Naive thymus-derived CD4-positive, alpha-beta T cell (primary cell): ENCODE measurements at regions of chr17 and their contacts with region 1.

Region 1: DNA sequence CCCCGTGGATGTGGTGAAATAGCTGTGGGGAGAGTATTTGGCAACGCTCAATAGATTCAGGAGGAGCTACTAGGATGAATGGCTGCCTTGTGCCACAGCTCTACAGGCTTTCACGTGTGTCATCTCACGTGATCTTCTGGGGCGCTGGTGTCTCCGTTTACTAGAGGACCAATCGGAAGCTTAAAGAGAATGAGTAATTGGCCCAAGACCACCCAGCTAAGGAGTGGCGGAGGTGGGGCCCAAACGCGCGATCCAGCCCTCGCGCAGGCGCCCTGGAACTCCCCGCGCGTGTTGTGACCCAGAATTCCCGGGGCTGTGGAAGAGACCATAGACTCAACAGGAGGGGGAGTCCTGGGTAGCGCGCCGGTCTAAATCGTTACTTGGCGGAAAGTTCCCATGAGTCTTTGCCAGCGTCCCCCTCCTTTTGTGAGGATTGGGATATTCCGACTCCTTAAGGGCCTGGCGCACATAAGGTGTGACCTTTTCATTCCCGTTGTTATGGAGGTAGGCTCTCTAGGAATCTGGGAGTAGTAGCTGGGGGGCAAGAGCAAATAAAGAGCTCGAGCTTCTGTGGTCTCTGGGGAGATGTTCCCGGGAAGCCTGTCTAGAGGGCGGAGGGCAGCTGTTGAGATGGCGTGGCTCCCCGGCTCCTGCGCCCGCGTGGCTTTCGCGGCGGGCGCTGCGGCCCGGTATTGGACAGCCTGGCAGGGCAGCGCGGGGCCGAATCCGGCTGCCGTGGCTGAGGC is 23.4 kb downstream of the TRPV2 start:
- DNase-seq: peak; percentile 81 to 97 (median 95)
- ATAC-seq: peak; percentile 93
- H3K4me3 ChIP-seq: peak overlapping the region; percentile 89
- H3K4me3 Mint-ChIP-seq: peak overlapping the region; percentile 91 to 100 (median 100)
- H3K27ac ChIP-seq: peak overlapping the region; percentile 92
- H3K27ac Mint-ChIP-seq: peak overlapping the region; percentile 91 to 100 (median 99)
- H3K4me1 ChIP-seq: peaks cover 27 to 41% of the 10 kb centered on the region in 2 donors
- H3K4me1 Mint-ChIP-seq: peaks cover 30 to 55% (median 47%) of the 10 kb centered on the region in 7 donors
- H3K27me3 ChIP-seq: no peaks in the 10 kb centered on the region
- H3K27me3 Mint-ChIP-seq: no peaks in the 10 kb centered on the region

Region 2: GRCh38 chr17:16353317-16354174 is 85.2 kb before region 1 on chr17 and contains the start of gene CENPV:
- CTCF ChIA-PET with region 1: no interaction called
- POLR2A ChIA-PET with region 1: interaction called, 14 read pairs
- intact Hi-C with region 1: loop called in 1 of 2 experiments (anchors 2 kb)
- DNase-seq: peak; percentile 62 to 76 (median 71)
- ATAC-seq: peak; percentile 96
- H3K4me3 ChIP-seq: peak within 1 kb of the TSS; percentile 78
- H3K4me3 Mint-ChIP-seq: peak within 1 kb of the TSS; percentile 89 to 98 (median 95)
- H3K27ac ChIP-seq: peak within 1 kb of the TSS; percentile 73
- H3K27ac Mint-ChIP-seq: peak within 1 kb of the TSS; percentile 73 to 98 (median 86)
- H3K4me1 ChIP-seq: peaks cover 4 to 5% of the 10 kb centered on the region in 2 donors
- H3K4me1 Mint-ChIP-seq: peaks cover 11 to 23% (median 19%) of the 10 kb centered on the region in 7 donors
- H3K27me3 ChIP-seq: no peaks in the 10 kb centered on the region
- H3K27me3 Mint-ChIP-seq: peaks cover 0 to 27% (median 0%) of the 10 kb centered on the region in 5 donors
- total RNA-seq, gene CENPV: 9.8 to 30.3 (median 21.7) TPM

Region 3: DNA sequence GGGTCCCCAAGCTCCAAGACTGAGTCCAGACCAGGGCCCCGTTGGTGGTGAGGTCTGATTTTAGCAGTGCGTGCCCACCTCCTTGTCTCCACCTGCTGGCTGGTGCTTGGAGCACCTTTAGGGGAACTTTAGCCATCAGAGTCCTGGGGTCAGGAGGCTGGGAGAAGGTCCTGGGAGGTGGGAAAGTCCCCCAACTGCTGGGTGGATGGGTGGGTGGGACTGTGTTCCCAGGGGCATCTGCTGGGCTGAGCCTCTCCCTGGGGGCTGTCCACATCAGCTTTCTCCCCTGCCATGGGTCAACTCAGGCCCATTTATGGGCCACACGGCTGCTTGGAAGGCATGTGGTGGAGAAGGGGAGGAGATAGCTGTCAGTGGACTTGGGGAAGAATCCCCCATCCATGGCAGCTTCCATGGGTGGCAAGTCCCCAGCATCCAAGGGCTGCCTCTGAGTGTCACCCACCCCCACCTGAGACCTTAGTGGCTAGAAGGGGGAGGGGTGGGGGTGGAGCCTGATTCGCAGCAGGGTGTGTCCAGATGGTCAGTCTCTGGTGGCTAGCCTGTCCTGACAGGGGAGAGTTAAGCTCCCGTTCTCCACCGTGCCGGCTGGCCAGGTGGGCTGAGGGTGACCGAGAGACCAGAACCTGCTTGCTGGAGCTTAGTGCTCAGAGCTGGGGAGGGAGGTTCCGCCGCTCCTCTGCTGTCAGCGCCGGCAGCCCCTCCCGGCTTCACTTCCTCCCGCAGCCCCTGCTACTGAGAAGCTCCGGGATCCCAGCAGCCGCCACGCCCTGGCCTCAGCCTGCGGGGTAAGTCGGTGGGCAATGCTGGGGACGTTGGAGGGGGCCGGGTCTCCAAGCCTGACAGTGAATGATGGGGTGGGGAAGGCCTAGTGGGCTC is 23.5 kb before region 1 on chr17 and contains the start of gene TRPV2:
- CTCF ChIA-PET with region 1: interaction called, 6 read pairs
- POLR2A ChIA-PET with region 1: interaction called, 55 read pairs
- intact Hi-C with region 1: loop called (anchors 1 kb)
- DNase-seq: peak in 8 of 9 donors; percentile 36 to 58 (median 47)
- ATAC-seq: peak; percentile 57
- H3K4me3 ChIP-seq: peak within 1 kb of the TSS; percentile 93
- H3K4me3 Mint-ChIP-seq: peak within 1 kb of the TSS; percentile 90 to 100 (median 98)
- H3K27ac ChIP-seq: peak within 1 kb of the TSS; percentile 94
- H3K27ac Mint-ChIP-seq: peak within 1 kb of the TSS; percentile 96 to 100 (median 98)
- H3K4me1 ChIP-seq: peaks cover 37 to 47% of the 10 kb centered on the region in 2 donors
- H3K4me1 Mint-ChIP-seq: peaks cover 33 to 55% (median 42%) of the 10 kb centered on the region in 7 donors
- H3K27me3 ChIP-seq: no peaks in the 10 kb centered on the region
- H3K27me3 Mint-ChIP-seq: no peaks in the 10 kb centered on the region
- total RNA-seq, gene TRPV2: 66.8 to 141 (median 80.0) TPM

Region 4: DNA sequence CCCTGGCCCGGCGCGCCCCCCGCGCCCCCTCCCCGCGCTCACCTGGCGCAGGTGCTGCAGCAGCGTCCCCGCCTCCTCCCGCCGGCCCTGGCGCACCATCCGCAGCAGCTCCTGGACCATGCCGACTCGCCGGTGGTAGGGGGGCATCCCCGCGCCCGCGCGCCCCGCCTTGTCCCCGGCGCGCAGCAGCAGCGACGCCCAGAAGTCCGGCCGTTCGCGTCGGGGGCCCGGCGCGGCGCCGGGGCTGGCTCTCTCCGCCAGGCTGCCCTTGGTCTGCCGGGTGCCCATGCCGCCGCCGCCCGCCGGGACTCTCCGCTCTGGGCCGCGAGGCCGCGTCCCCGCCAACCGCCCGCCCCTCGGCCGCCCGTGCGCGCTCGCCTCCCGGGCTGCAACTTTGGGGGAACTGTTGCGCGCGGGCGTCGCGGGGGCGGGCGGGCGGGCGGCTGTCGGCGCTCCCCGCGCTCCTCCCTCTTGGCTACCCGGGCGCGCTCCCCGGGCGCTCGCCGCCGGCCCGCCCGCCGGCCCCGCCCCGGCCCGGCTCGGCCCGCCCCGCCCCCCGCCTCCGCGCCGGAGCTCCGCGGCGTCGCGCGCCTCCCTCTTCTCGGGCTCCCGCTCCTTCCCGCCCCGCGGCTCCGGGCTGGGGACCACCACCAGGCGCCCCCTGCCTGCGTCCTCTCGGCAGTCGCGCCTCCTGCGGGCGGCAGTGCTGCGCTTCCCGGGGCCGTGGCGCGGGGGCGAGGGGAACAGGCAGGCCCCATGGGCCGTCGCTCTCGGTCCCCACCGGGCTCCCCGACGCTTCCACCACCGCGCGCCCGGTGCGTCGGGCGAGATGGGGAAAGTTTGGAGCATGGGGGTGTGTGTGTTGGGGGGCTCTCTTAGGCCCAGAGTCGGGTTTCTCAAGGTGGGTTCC is 53.2 kb after region 1 on chr17 and contains the start of gene LRRC75A:
- CTCF ChIA-PET with region 1: no interaction called
- POLR2A ChIA-PET with region 1: interaction called, 3 read pairs
- intact Hi-C with region 1: loop called in 1 of 2 experiments (anchors 5 kb)
- DNase-seq: peak; percentile 10 to 77 (median 38)
- ATAC-seq: peak; percentile 94
- H3K4me3 ChIP-seq: peak within 1 kb of the TSS; percentile 51
- H3K4me3 Mint-ChIP-seq: peak within 1 kb of the TSS; percentile 70 to 89 (median 81)
- H3K27ac ChIP-seq: no peak within 1 kb of the TSS
- H3K27ac Mint-ChIP-seq: peak within 1 kb of the TSS in 4 of 9 donors; percentile 28 to 80 (median 48)
- H3K4me1 ChIP-seq: peaks cover 7 to 9% of the 10 kb centered on the region in 2 donors
- H3K4me1 Mint-ChIP-seq: peaks cover 3 to 16% (median 11%) of the 10 kb centered on the region in 7 donors
- H3K27me3 ChIP-seq: no peaks in the 10 kb centered on the region
- H3K27me3 Mint-ChIP-seq: peaks cover 0 to 54% (median 0%) of the 10 kb centered on the region in 5 donors
- total RNA-seq, gene LRRC75A: 0.92 to 5.2 (median 3.8) TPM

Region 5: DNA sequence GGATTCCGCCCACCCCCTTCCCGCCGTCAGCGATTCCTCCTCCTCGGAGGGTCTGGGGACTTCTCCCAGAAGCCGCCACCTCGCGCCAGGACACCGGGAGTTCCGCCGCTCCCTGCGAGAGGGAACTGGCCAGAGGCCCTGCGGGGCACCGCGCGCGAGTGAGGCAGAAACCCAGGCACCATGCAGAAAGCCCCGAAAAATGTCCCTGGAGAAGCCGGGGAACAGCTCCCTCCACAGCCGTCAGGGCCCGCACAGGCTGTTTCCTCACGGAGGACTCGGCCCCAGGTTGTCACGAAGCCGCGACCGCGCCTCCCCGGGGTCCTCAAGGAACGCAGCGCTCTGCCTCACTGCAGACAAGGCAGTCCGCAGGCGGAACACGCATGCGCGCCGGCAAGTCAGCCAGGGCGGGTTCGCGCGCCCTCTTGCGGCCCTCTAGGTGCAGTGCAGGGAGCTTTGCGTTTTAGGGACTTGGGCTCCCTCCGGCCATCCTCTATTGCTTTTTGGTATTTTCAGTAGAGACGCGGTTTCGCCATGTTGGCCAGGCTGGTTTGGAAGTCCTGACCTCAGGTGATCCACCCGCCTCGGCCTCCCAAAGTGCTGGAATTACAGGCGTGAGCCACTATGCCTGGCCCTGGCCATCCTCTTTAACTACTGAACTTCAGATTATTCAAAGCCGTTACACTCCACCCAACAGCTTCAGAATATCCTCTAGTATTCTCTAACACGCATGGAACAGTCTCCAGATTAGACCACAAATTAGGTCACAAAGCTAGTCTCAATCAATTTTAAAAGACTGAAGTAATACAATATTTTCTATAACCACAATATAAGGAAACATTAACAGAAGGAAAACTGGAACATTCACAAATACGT is 150.6 kb after region 1 on chr17:
- CTCF ChIA-PET with region 1: no interaction called
- POLR2A ChIA-PET with region 1: no interaction called
- intact Hi-C with region 1: loop called in 1 of 2 experiments (anchors 1 kb)
- DNase-seq: peak; percentile 86 to 96 (median 92)
- ATAC-seq: peak; percentile 99
- H3K4me3 ChIP-seq: peak overlapping the region; percentile 61
- H3K4me3 Mint-ChIP-seq: peak overlapping the region; percentile 70 to 85 (median 77)
- H3K27ac ChIP-seq: peak overlapping the region; percentile 47
- H3K27ac Mint-ChIP-seq: peak overlapping the region in 5 of 9 donors; percentile 7 to 80 (median 73)
- H3K4me1 ChIP-seq: peaks cover 0 to 3% of the 10 kb centered on the region in 2 donors
- H3K4me1 Mint-ChIP-seq: peaks cover 0 to 13% (median 4%) of the 10 kb centered on the region in 7 donors
- H3K27me3 ChIP-seq: no peaks in the 10 kb centered on the region
- H3K27me3 Mint-ChIP-seq: peaks cover 23 to 61% (median 25%) of the 10 kb centered on the region in 5 donors